ENCODE measurements at regions of chr14 and their contacts with region 1.

Region 1: GRCh38 chr14:94173885-94174603 is at the start of gene PPP4R4:
- DNase-seq: peak; percentile 77 to 92 (median 84)
- H3K4me3 ChIP-seq: peak within 1 kb of the TSS; percentile 77
- H3K4me3 Mint-ChIP-seq: peak within 1 kb of the TSS; percentile 81 to 96 (median 85)
- H3K27ac ChIP-seq: no peak within 1 kb of the TSS
- H3K27ac Mint-ChIP-seq: peak within 1 kb of the TSS in 7 of 8 donors; percentile 13 to 90 (median 74)
- H3K4me1 ChIP-seq: peaks cover 10% of the 10 kb centered on the region
- H3K4me1 Mint-ChIP-seq: peaks cover 16 to 29% (median 24%) of the 10 kb centered on the region in 3 donors
- H3K27me3 ChIP-seq: no peaks in the 10 kb centered on the region
- H3K27me3 Mint-ChIP-seq: peaks cover 20 to 29% of the 10 kb centered on the region in 2 donors
- total RNA-seq, gene PPP4R4: 1.2 to 1.8 TPM

Region 2: GRCh38 chr14:94161981-94162380 is 12.1 kb before region 1 on chr14:
- CTCF ChIA-PET with region 1: interaction called, 12 read pairs
- POLR2A ChIA-PET with region 1: no interaction called
- DNase-seq: no peak
- H3K4me3 ChIP-seq: no peak overlapping the region
- H3K4me3 Mint-ChIP-seq: peak overlapping the region in 1 of 7 donors; percentile 33
- H3K27ac ChIP-seq: no peak overlapping the region
- H3K27ac Mint-ChIP-seq: peak overlapping the region in 5 of 8 donors; percentile 17 to 90 (median 44)
- H3K4me1 ChIP-seq: peaks cover 45% of the 10 kb centered on the region
- H3K4me1 Mint-ChIP-seq: peaks cover 33 to 59% (median 34%) of the 10 kb centered on the region in 3 donors
- H3K27me3 ChIP-seq: no peaks in the 10 kb centered on the region
- H3K27me3 Mint-ChIP-seq: peaks cover 6 to 14% of the 10 kb centered on the region in 2 donors

Measured in CD8-positive, alpha-beta memory T cell (primary cell).